Panc1 (cell line): ENCODE measurements at regions of chrX and their contacts with region 1.

Region 1: DNA sequence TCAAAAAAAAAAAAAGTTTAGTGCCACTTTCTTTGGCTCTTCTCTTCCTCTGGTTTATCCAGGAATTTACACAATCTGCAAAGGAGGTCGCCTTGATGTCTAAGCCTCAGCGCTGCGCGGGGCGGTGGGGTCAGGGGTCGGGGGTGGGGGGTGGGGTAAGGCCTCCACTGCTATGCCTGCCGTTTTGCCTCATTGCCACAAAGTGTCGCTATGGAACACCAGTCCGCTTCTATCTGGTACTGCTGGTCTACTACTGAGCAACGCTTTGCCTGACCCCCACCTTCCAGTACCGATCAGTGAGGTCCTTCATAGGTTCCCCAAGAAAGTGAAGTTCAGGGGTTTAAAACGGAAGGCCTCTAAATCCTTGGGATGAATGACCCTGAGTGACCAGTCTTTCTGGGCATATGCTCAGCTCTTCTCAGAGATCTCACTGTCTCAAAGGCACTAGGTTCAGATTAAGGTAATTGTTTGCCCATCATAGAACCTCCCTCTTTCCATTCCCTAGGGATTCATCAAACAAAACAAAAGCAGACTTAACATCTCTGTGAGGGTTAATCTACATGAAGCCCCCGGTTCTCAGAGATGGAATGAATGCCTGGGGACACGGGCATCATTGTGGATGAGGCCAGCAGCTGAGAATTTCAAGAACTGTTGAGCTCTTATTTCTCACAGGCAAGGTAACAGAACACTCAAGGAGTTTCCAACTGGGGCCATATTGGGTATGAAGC is 16.9 kb upstream of the TSR2 start:
- DNase-seq: no peak
- ATAC-seq: no peak
- H3K4me3 ChIP-seq: no peak overlapping the region
- H3K27ac ChIP-seq: no peak overlapping the region
- H3K4me1 ChIP-seq: no peaks in the 10 kb centered on the region
- H3K27me3 ChIP-seq: no peaks in the 10 kb centered on the region
- CTCF ChIP-seq: no peak

Region 2: DNA sequence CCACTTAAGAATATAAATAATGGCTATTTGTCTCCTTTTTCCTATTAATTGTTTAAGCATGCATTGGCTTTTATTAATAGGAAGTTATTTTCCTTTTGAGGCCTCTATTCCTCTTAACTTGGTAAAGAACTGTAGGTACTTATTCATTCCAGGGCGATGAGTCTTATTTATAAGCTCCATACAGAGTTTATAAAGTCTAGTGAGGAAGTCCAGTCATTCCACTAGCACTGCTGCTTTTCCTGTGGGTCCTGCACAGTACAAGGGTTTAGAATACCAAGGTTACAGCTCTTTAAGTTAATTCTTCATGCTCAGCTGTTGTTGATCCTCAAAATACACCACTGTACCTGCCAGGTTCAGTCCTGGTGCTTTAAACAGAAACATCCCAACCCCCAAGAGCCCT is 37.0 kb before region 1 on chrX:
- CTCF ChIA-PET with region 1: no interaction called
- POLR2A ChIA-PET with region 1: interaction called, 17 read pairs
- in situ Hi-C with region 1: no loop called
- intact Hi-C with region 1: no loop called
- DNase-seq: no peak
- ATAC-seq: no peak
- H3K4me3 ChIP-seq: no peak overlapping the region
- H3K27ac ChIP-seq: no peak overlapping the region
- H3K4me1 ChIP-seq: no peaks in the 10 kb centered on the region
- H3K27me3 ChIP-seq: no peaks in the 10 kb centered on the region
- CTCF ChIP-seq: no peak

Region 3: DNA sequence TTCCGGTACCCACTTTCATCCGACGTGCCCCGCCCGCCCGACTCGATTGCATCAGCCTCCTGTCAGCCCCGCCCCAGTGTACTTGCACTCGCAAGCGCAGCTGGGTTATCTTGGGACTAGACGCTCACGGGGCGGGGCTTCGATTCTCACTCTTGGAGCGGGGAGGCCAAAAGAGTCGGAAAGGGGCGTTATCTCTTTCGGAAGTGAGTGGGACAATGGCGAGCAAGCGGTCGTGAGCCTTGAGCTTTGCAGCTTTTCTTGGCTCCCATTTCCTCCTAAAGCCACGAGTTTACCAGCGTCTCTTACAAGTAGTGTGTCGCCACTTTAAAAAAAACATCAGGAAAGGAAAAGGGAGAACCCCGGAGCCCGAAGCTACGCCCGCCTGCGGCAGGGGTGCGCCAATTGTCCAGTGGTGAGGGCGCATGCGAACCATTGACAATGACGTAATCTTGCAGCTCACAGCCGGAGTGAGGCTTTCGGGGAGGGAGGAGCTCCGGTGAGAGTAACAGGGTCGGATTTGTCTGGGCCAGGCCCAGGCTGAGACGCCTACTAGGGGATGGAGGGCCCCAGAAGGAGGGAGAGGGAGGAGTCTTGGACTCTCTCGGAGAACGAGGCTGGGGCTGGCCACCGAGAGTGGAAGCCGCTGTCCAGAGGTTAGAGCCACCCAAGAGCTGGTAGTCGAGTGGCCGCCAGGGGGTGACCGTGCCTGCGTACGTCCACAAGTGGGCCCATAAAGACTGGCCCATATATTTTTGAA is 216.2 kb after region 1 on chrX:
- CTCF ChIA-PET with region 1: no interaction called
- POLR2A ChIA-PET with region 1: no interaction called
- in situ Hi-C with region 1: no loop called
- intact Hi-C with region 1: no loop called
- DNase-seq: peak; percentile 88
- ATAC-seq: peak; percentile 99
- H3K4me3 ChIP-seq: peak overlapping the region; percentile 57 to 65
- H3K27ac ChIP-seq: peak overlapping the region; percentile 97
- H3K4me1 ChIP-seq: peaks cover 4% of the 10 kb centered on the region; the same call in 1 of the 2 replicates
- H3K27me3 ChIP-seq: no peaks in the 10 kb centered on the region
- CTCF ChIP-seq: peak; percentile 82